Right ventricle myocardium superior (tissue), 1 donor: ENCODE measurements at regions of chr5 and their contacts with region 1.

Region 1: DNA sequence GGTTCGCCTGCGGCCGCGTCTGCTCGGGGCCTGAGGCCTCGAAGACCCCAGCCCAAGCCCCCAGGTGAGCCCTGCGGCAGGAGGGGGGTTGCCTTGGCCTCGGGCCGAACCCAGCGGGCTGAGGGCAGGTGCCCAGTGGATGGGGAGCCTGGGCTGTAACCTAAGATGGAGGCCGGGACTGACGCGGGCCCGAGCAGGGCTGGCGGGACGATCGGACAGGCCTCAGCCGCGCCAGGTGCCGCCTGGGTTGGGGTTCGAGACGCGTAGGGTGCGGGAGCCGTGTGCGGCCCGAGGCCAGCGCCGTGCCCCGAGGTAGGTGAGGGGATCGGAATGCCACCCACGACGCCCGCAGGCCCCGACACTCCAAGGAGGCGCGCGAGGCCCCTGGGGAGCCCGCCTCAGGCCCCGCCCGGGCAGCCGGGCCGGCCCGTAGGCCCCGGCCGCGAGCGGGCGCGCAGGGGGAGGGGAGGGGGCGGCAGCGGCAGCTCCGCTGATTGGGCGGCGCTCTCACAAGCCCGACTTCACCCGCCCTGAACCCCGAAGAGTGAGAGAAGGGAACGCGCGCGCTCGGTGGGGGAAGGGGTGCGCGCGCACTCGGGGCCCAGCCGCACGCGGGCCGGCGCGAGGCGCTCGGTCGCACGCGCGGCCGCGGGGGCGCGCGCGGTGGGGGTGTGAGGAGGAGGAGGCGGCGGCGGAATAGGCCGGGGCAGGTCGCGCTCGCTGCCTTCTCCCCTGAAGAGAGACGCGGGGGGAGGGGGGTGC is at the start of gene NSD1:
- DNase-seq: peak; percentile 93
- ATAC-seq: peak; percentile 82
- total RNA-seq, gene NSD1: 33.6 TPM

Region 2: DNA sequence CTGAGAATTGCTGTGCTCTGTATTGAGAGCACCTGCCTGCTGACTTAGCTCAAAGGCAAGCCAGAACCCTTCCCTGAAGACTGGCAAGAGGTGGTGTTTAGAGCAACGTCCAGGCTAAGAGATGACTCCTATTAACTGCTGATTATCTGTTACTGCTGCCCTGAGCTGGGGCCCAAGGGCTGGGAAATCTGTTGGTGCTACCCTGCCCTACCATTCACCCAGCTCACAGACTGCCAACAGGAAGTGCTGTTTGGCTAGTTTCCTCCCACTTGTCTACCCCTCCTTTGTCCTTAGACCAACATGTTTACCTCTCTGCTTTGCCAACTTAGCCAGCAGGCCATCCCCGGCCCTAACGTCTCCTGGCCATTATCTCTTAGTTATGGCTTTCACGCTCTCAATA is 163.3 kb after region 1 on chr5:
- intact Hi-C with region 1: loop called (anchors 10 kb)
- DNase-seq: no peak
- ATAC-seq: peak; percentile 10